Vagina (tissue), 2 donors: ENCODE measurements at regions of chr9 and their contacts with region 1.

Region 1: DNA sequence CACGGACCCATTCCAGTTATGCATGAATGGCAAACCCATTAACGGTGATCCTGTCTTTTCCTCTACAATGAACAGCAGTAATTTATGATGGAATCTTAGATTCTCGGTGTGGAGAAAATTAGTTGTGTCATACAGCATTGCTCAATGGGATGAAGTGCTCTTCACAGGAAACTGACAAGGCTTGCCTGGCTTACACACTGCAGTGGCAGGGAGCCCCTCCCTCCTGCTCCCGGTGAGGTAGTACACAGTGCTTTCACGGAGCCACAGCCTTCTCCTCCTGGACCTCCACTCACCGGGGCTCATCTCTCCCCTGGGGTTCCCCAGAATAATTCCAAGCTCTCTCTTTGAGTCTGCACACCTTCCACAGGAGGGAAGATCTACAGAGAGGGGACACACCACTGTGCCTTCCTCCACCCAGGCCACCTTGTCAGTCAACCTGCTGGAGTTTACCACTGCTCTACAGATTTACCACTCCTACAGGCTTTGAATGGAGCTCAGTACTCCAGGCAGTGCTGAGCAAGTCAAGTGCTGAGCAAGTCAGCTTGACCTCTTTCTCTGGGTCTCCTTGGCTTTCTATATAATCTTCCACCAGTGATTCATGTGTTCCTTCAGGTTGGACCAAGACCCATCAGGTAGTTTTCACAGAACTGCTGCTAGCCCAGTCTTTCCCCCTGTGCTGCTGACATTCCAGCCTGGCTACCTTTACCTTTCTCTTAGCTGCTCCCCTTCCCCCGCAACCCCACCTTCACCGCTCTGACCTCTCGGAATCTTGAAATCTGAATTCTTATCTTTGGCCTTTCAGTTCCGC is 59.1 kb upstream of the TBC1D2 start:
- DNase-seq: no peak
- H3K4me3 ChIP-seq: no peak overlapping the region
- H3K27ac ChIP-seq: no peak overlapping the region
- H3K4me1 ChIP-seq: no peaks in the 10 kb centered on the region
- H3K27me3 ChIP-seq: no peaks in the 10 kb centered on the region
- CTCF ChIP-seq: no peak
- POLR2A ChIP-seq: no peak

Region 2: GRCh38 chr9:98365227-98365669 is 50.7 kb after region 1 on chr9:
- intact Hi-C with region 1: no loop called
- DNase-seq: no peak
- H3K4me3 ChIP-seq: no peak overlapping the region
- H3K27ac ChIP-seq: no peak overlapping the region
- H3K4me1 ChIP-seq: no peaks in the 10 kb centered on the region
- H3K27me3 ChIP-seq: no peaks in the 10 kb centered on the region
- CTCF ChIP-seq: no peak
- POLR2A ChIP-seq: no peak

Region 3: GRCh38 chr9:98791147-98792095 is 476.8 kb after region 1 on chr9:
- intact Hi-C with region 1: loop called (anchors 5 kb)
- DNase-seq: peak; percentile 84 to 93
- H3K4me3 ChIP-seq: no peak overlapping the region
- H3K27ac ChIP-seq: peak overlapping the region; percentile 59
- H3K4me1 ChIP-seq: peaks cover 24% of the 10 kb centered on the region
- H3K27me3 ChIP-seq: no peaks in the 10 kb centered on the region
- CTCF ChIP-seq: peak; percentile 94 to 100 (median 96)
- POLR2A ChIP-seq: no peak